ENCODE measurements at regions of chr3 and their contacts with region 1.

Region 1: DNA sequence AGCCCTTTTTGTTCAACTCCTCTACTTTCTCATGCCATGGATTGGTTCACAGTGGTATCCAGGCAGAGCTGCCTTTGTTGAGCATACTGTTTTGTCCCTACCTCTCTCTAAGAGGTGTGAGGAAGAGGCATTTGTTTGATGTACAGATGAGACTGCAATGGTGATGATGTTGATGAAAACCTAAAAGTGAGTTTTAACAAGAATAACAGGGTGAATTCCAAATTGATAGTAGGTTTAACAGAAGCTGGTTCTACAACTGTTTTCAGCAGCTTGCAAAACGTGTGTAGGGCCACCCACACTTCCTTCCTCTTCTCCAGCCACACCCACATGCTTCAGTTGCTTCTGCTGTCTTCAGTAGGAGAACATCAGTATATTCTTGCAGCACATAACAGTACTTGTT is 10.2 kb downstream of the SNRK start:
- DNase-seq: no peak
- ATAC-seq: peak; percentile 98
- H3K4me3 Mint-ChIP-seq: peak overlapping the region; percentile 60
- H3K27ac Mint-ChIP-seq: peak overlapping the region; percentile 79
- H3K4me1 Mint-ChIP-seq: peaks cover 74% of the 10 kb centered on the region
- H3K27me3 Mint-ChIP-seq: no peaks in the 10 kb centered on the region
- CTCF ChIP-seq: no peak

Region 2: DNA sequence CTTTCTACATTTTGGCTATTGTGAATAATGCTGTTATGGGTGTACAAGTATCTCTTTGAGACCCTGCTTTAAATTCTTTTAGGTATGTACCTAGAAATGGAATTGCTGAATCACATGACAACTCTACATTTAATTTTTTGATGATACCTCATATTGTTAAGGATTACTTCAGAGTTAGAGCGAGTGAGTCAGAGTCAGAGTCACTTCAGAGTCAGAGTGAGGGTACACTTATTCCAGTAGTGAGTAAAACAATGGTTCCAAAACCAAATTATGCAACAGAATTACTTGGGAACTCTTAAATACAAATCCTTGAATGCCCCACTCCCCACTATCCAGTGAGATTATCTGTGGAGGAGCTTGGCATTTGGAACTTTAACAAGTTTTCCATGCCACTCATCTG is 60.6 kb before region 1 on chr3:
- CTCF ChIA-PET with region 1: no interaction called
- POLR2A ChIA-PET with region 1: no interaction called
- intact Hi-C with region 1: no loop called
- DNase-seq: no peak
- ATAC-seq: no peak
- H3K4me3 Mint-ChIP-seq: no peak overlapping the region
- H3K27ac Mint-ChIP-seq: no peak overlapping the region
- H3K4me1 Mint-ChIP-seq: no peaks in the 10 kb centered on the region
- H3K27me3 Mint-ChIP-seq: peaks cover 4% of the 10 kb centered on the region
- CTCF ChIP-seq: no peak

Region 3: DNA sequence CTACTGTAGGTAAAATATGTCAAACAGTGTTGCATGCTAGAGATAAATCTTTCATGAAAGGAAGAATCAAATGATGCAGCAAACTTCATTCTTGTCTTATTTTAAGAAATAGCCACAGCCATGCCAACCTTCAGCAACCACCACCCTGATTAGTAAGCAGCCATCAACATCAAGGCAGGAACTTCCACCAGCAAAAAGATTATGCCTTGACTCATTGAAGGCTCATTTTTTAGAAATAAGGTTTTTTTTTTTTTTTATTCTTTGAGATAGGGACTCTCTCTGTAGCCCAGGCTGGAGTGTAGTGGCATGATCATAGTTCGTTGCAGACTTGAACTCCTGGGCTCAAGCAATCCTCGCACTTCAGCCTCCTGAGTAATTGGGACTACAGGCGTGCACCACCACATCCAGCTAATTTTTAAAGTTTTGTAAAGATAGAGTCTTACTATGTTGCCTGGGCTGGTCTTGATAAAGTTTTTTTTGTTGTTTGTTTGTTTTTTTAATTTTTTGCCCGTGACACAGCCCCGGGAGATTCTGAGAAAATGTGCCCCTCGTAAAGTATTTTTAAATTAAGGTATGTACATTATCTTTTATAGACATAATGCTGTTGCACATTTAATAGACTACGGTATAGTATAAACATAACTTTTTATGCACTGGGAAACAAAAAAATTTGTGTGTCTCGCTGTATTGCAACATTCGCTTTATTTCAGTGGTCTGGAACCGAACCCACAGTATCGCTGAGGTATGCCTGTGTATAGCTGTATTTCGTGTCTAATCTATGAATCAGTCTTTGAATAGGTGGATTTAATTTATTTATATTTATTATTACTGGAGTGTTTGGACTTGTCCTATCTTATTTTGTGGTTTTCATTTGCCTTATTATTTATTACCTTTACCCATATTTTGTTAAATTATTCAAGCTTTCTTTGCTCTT is 13.1 kb after region 1 on chr3:
- CTCF ChIA-PET with region 1: no interaction called
- POLR2A ChIA-PET with region 1: interaction called, 5 read pairs
- intact Hi-C with region 1: loop called (anchors 2 kb)
- DNase-seq: no peak
- ATAC-seq: no peak
- H3K4me3 Mint-ChIP-seq: no peak overlapping the region
- H3K27ac Mint-ChIP-seq: no peak overlapping the region
- H3K4me1 Mint-ChIP-seq: peaks cover 41% of the 10 kb centered on the region
- H3K27me3 Mint-ChIP-seq: no peaks in the 10 kb centered on the region
- CTCF ChIP-seq: no peak

Measured in activated B cell treated with CpG ODN at 0.5 μM for 24 hours (primary cell).